ENCODE measurements at regions of chr1 and their contacts with region 1.

Region 1: DNA sequence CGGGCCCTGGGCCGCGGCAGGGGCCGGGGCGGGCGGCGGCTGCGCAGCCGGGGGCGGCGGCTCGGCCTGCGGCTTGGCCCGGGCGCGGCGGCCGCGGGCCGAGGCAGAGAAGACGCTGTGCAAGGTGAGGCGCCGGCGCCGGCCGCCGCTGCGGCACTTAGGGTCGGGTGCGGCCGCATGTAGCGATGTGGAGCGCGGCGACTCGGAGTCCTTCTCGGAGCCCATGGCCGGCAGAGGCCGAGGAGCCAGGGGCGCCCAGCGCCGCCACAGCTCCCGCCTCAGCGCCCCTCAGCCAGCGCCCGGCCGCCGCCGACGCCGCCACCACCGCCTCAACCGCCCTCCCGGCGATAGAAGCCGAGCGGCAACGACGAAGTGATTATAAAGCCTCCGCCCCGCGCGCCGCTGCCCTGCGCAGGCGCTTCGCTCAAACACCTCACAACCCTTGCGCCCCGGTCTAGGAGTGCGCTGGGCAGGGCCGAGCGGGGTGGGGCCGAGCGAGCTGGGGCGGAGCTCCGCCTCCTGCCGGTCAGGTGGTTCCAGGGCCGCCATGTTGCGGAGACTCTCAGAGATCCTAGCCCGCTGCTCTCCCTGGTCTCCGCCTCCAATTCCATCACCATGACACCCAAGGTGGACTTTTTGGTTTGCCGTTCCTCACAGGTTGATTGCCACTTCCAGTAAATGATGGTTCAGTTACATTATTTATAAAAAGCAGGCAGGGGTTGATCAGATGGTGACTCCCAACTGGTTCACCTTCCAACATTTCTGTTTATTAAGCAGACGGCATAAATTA is at the start of gene RNF19B:
- DNase-seq: peak; percentile 82
- ATAC-seq: peak; percentile 96
- H3K4me3 ChIP-seq: peak within 1 kb of the TSS; percentile 76 to 82
- H3K27ac ChIP-seq: peak within 1 kb of the TSS; percentile 92
- H3K4me1 ChIP-seq: peaks cover 16% of the 10 kb centered on the region; the same call in 1 of the 2 replicates
- H3K27me3 ChIP-seq: no peaks in the 10 kb centered on the region
- CTCF ChIP-seq: no peak
- total RNA-seq, gene RNF19B: 29.1 TPM

Region 2: DNA sequence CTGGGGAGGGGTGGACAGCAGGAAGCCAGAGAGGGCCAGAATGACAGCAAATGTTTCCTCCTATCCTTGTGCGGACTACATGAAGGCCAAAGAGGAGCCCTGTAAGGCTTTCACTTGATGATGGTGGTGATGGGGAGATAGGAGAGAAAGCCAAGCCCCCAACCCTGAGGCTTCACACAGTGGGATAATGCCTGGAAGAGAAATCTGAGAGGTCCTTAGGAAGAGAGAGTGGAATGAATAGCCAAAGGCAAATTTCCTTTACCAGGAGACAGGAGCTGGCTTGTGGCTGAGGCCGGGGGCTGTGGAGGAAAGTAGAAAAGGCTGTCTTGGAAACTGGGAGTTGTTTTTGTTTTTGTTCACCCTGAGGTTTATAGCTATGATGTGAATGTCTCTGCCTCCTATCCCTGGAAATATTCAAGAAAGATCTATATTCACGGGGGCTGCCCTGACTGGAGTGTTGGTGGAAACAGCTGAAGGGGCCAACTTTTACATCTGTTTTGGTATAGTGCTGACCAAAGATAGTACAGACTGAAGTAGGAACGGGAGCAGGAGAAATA is 13.0 kb after region 1 on chr1:
- CTCF ChIA-PET with region 1: no interaction called
- POLR2A ChIA-PET with region 1: interaction called, 11 read pairs
- in situ Hi-C with region 1: no loop called
- intact Hi-C with region 1: no loop called
- DNase-seq: no peak
- ATAC-seq: no peak
- H3K4me3 ChIP-seq: no peak overlapping the region
- H3K27ac ChIP-seq: peak overlapping the region; percentile 44; the same call in 1 of the 2 replicates
- H3K4me1 ChIP-seq: peaks cover 14% of the 10 kb centered on the region
- H3K27me3 ChIP-seq: no peaks in the 10 kb centered on the region
- CTCF ChIP-seq: no peak

Region 3: DNA sequence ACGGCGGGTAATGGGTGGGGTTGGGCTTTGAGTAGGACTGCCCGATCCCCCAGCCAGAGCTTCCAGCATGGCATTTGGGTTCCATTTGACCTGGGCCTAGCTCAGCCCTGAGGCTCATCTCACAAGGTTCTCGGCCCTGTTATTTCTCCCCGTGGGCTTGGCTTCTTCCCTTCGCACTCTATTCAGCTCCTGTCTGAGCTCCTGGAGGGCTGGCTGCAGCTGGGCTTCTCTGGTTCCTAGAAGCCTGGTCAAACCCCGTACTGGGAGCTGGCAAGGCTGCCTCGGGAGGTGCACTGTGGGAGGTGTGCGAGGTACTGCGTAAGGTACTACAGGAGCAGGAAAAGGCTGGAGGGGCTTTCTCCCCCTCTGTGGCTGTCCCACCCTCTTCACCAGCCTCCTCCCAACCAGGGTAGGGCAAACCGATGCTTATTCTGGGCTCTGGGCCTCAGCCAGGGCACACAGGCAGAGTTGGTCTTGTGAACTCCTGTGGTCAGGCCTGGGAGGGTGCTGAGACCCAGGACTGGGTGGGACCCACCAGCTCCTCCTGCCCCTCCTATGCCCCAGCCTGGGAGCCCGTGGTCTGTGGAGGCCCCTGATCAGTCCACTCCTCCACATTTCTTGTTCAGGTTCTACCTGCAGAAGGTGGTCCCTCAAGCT is 355.4 kb after region 1 on chr1:
- CTCF ChIA-PET with region 1: no interaction called
- POLR2A ChIA-PET with region 1: no interaction called
- in situ Hi-C with region 1: no loop called
- intact Hi-C with region 1: no loop called
- DNase-seq: no peak
- ATAC-seq: peak; percentile 49
- H3K4me3 ChIP-seq: no peak overlapping the region
- H3K27ac ChIP-seq: no peak overlapping the region
- H3K4me1 ChIP-seq: peaks cover 5% of the 10 kb centered on the region; the same call in 1 of the 2 replicates
- H3K27me3 ChIP-seq: no peaks in the 10 kb centered on the region
- CTCF ChIP-seq: no peak

Measured in Panc1 (cell line).